SK-N-SH (cell line): ENCODE measurements at regions of chr19 and their contacts with region 1.

Region 1: GRCh38 chr19:39144245-39145071 is 18.9 kb downstream of the PAK4 start:
- DNase-seq: peak; percentile 80
- H3K4me3 ChIP-seq: no peak overlapping the region
- H3K27ac ChIP-seq: peak overlapping the region in 1 of 2 experiments; percentile 82; a peak in 2 of 4 replicates
- H3K4me1 ChIP-seq: peaks cover 2 to 43% of the 10 kb centered on the region in 2 experiments; a peak in 3 of 4 replicates
- H3K27me3 ChIP-seq: no peaks in the 10 kb centered on the region
- CTCF ChIP-seq: no peak
- EP300 ChIP-seq: peak in 1 of 2 experiments; percentile 39; a peak in 1 of 4 replicates
- RAD21 ChIP-seq: no peak

Region 2: DNA sequence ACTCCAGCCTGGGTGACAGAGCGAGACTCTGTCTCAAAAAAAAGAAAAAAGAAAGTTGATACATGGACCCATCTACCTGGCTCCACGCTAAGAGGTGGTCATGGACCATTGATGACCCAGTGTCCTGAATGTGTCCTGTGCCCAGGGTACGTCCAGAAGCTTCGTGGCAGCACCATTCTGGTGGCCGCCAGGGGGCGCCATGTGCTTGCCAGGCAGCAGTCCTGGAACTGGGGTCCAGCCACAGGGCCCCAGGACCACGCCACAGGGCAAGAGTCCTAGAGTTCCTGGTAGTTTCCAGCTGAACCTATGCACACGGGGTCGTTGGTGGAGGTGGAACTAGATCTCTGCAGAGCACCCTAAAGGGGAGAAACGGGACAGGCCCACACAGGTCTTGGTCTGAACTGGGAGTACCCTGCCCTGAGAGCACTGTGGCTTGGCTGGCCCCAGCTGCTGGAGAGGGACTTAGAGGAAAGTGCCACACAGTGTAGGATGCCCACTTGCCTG is 92.2 kb before region 1 on chr19:
- CTCF ChIA-PET with region 1: no interaction called
- POLR2A ChIA-PET with region 1: no interaction called
- DNase-seq: peak; percentile 75
- H3K4me3 ChIP-seq: peak overlapping the region in 1 of 2 experiments; percentile 20; a peak in 1 of 4 replicates
- H3K27ac ChIP-seq: no peak overlapping the region
- H3K4me1 ChIP-seq: no peaks in the 10 kb centered on the region; a peak in 1 of 4 replicates
- H3K27me3 ChIP-seq: no peaks in the 10 kb centered on the region
- CTCF ChIP-seq: peak; percentile 92
- EP300 ChIP-seq: no peak
- RAD21 ChIP-seq: peak; percentile 66

Region 3: DNA sequence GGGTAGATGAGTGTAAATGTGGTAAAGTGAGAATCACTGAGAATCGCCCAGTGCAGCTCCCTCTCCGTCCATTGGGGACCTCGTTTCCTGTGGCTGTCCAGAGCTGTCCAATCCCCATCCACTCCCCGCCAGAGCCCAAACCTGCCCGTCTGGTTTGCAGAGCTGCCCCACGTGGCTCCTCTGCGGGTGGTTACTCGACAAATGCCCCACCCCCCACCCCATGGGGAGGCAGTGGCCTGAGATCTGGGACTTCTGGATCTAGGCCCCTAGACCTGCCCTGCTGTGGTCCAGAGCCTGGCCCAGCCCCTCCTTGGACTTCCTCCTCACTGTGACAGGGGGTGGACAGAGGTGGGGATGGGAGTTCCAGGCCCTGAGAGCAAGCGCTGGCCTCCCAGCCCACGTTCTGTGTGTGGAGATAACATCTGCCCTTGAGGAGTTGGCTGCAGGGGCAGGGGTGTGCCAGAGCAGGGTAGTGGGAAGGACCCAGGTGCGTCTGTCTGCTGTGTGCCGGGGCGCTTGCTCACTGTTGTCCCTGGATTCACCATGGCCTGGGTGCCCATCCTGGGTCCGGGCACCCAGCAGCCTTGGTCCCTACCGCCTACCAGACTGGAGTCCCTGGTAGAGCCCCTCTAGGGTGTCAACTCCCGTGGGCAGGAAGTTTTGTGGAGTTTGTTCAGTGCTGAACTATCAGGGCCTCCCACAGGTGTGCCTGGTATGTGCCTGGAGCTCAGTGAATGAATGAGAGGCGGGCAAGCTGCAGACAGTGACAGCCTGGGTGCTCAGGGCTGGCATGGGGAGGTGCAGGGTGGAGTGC is 10.3 kb after region 1 on chr19:
- CTCF ChIA-PET with region 1: interaction called, 16 read pairs
- POLR2A ChIA-PET with region 1: no interaction called
- DNase-seq: peak; percentile 75
- H3K4me3 ChIP-seq: no peak overlapping the region
- H3K27ac ChIP-seq: peak overlapping the region in 1 of 2 experiments; percentile 7; a peak in 1 of 4 replicates
- H3K4me1 ChIP-seq: peaks cover 0 to 48% of the 10 kb centered on the region in 2 experiments; a peak in 1 of 4 replicates
- H3K27me3 ChIP-seq: no peaks in the 10 kb centered on the region
- CTCF ChIP-seq: no peak
- EP300 ChIP-seq: no peak
- RAD21 ChIP-seq: no peak

Region 4: DNA sequence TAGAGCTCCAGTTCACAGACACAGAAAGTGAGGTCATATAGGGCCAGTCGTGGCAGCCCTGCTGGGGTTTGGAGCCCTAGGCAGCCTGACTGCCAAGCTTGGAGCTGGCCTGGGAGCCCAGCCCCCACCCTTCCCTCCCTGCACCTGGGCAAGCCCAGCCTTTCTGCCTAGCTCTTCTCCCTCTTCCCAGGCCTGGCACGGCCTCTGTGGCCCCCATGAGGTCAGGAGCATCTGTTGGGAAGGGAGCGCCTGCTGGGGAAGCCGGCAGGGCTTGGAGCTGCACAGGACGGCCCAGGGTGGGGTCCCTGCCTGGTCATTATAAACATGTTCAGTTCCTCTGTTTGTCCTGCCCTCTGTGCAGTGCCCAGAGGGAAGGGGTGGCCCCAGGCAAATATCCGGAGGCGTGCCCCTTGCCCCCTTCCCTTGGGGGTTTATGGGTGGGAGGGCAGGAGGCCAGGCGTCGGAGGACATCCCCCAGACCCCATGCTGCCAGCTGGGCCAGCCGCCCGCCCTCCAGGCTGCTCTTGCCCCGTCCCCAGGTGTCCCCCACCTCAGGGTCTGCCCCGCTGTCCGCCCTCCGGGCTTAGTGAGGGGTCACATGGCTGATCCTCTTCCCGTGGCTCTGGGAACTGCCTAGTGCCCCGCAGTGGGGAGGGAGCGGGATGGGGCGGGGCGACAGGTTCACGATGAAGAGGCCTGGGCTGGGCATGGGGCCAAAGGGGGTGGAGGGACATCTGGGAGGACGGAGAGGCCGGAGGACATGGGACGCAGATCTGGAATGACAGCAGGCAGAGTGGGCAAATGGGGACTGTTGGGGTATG is 22.3 kb after region 1 on chr19:
- CTCF ChIA-PET with region 1: interaction called, 10 read pairs
- POLR2A ChIA-PET with region 1: no interaction called
- DNase-seq: peak; percentile 92
- H3K4me3 ChIP-seq: no peak overlapping the region
- H3K27ac ChIP-seq: peak overlapping the region in 1 of 2 experiments; percentile 69; a peak in 2 of 4 replicates
- H3K4me1 ChIP-seq: peaks cover 0 to 37% of the 10 kb centered on the region in 2 experiments; a peak in 1 of 4 replicates
- H3K27me3 ChIP-seq: no peaks in the 10 kb centered on the region
- CTCF ChIP-seq: no peak
- EP300 ChIP-seq: no peak; a peak in 1 of 4 replicates
- RAD21 ChIP-seq: peak; percentile 28; the same call in 1 of the 2 replicates

Region 5: GRCh38 chr19:39199025-39199424 is 54.6 kb after region 1 on chr19:
- CTCF ChIA-PET with region 1: no interaction called
- POLR2A ChIA-PET with region 1: no interaction called
- DNase-seq: peak; percentile 66
- H3K4me3 ChIP-seq: no peak overlapping the region
- H3K27ac ChIP-seq: no peak overlapping the region
- H3K4me1 ChIP-seq: peaks cover 0 to 6% of the 10 kb centered on the region in 2 experiments; a peak in 1 of 4 replicates
- H3K27me3 ChIP-seq: peaks cover 45% of the 10 kb centered on the region
- CTCF ChIP-seq: no peak
- EP300 ChIP-seq: no peak
- RAD21 ChIP-seq: no peak